Right ventricle myocardium superior (tissue), 1 donor: ENCODE measurements at regions of chr4 and their contacts with region 1.

Region 1: DNA sequence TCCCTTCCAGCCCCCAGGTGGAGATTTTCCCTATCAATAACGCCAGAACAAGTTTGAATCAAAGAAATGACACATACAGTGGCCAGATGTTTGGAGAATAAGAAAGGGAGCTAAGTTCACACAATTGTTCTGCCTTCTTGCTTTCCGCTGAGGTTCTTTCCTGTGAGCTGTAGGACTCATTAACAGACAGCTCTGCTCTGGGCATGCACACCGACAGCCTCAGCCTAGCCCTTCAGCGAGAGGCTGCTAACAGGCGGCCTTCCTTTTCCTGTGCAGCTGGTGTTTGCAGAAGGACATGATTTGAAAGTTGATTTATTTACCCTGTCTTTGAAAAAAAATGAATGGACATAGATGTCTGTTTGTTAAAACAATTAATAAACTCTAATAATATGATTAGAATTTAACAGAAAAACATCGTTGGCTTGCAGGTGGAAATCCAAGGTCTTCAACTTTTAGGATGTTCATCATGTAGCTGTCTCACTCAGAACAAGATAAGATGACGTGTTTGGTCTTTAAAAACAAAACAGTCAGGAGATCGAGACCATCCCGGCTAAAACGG is 183.3 kb downstream of the KDR start:
- DNase-seq: no peak
- ATAC-seq: peak; percentile 45

Region 2: GRCh38 chr4:54784161-54784671 is 157.9 kb before region 1 on chr4:
- intact Hi-C with region 1: no loop called
- DNase-seq: peak; percentile 90
- ATAC-seq: peak; percentile 90

Region 3: DNA sequence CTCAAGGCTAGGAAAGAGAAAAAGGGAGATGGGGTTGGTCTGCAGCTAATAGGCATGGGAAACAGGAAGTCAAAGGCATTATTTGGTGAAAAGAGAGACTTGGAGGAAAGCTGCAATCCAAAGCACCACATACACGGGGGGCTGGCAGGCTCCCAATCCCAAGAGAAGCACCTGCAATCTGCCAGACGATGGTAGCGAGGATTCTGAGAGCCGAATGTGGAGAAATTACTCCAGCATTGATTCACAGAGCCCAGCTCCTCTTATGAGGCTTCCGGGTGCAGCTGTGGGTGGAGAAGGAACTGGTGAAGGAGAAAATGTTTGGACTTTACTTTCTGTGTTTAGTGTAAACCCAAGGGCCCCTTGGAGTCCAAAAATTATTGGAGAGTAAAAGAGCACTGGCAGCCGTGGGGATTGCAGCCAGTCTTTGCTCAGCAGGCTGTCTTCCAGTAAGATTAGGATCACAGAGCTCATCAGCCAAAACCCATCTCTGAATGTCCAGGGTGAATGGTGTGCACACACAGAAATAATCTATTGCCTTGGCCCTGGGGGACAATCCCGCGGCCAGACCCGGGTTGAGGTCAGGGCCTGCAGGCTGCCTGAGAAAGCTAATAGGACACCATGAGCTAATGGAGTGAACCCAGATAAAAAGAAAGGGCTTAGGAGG is 86.8 kb before region 1 on chr4:
- intact Hi-C with region 1: loop called (anchors 10 kb)
- DNase-seq: peak; percentile 58
- ATAC-seq: peak; percentile 88